IMR-90 (cell line): ENCODE measurements at regions of chr5 and their contacts with region 1.

Region 1: DNA sequence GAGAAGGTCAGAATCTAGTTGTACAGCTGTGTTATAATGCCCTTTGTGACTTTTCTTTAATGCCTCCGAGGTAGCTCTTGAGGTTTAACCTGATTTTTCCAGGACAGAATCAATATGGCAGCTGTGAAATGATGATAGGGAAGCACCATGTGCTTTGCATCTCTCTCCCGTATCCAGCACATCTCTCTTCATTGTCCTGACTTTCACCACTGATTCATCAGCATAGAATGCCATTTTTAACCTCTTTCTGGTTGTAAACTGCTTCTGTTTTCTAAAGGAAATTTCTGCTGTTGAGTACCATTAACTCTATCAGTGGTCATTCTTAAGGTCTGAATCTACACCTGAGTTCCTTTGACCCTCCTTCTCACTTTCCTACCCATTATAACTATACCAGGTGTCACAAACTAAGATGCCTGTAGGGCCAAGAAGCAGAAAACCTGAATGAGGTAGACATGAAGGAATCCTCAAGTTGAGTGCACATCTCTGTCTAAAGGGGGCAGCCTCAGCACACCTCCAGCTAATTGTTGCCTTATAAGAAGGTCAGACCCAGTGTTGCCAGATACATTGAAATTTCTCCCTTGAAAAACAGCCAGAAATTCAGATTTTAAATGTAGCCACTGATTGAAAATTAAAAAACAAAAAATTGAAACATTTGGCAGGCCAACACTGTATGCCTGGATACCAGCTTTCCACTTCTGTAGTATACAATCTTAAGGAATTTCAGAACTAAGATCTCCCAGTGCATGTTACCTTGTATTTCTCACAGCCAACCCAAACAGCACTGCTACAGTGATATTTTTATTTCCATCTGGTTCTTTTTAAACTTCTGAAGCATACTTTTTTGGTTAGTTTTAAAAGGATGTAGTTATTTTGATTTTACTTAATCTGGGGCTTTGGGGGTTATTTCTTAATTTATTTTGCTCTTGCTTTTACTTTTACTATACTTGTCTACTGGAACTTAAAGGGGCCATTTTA is 35.8 kb upstream of the TLX3 start:
- DNase-seq: peak; percentile 40
- ATAC-seq: peak; percentile 15; the same call in 1 of the 2 replicates
- H3K4me3 ChIP-seq: no peak overlapping the region
- H3K27ac ChIP-seq: no peak overlapping the region
- H3K4me1 ChIP-seq: peaks cover 12% of the 10 kb centered on the region
- H3K27me3 ChIP-seq: no peaks in the 10 kb centered on the region
- CTCF ChIP-seq: peak; percentile 50
- POLR2A ChIP-seq: no peak
- RAD21 ChIP-seq: peak; percentile 49

Region 2: DNA sequence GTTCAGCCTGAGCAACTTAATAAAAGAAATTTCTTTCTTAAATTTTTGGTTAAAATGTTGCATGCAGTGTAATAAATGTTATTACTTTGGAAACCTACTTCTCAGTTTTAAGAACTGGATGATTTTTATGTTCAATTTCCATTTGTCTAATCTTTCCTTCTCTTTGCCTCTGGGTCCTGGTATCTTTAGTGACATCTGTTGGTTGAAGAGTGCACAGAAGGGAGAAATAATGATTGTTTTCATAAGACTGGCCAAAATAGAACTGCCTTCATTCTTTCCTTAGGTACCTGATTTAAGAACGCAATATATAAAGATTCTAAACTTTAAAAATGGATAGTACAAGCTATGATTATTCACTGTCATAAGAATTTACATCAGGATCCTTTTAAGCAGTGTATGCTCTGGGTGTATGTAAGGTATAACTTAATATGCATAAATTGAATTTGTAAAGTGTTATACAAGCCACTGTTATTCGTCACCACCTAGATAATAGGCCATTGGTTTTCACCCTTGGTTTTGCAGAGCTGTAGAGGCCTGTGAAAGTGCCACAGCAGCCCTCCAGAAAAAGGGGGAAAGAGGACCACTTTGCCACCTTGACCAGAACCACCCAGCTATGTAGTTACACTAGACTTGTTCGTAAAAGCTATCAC is 47.1 kb before region 1 on chr5:
- CTCF ChIA-PET with region 1: interaction called, 3 read pairs
- POLR2A ChIA-PET with region 1: no interaction called
- dilution Hi-C with region 1: no loop called
- in situ Hi-C with region 1: no loop called
- intact Hi-C with region 1: loop called (anchors 5 kb)
- DNase-seq: peak; percentile 7
- ATAC-seq: no peak
- H3K4me3 ChIP-seq: no peak overlapping the region
- H3K27ac ChIP-seq: no peak overlapping the region
- H3K4me1 ChIP-seq: no peaks in the 10 kb centered on the region
- H3K27me3 ChIP-seq: no peaks in the 10 kb centered on the region
- CTCF ChIP-seq: peak; percentile 26; the same call in 1 of the 2 replicates
- POLR2A ChIP-seq: no peak
- RAD21 ChIP-seq: peak; percentile 22; the same call in 1 of the 2 replicates

Region 3: DNA sequence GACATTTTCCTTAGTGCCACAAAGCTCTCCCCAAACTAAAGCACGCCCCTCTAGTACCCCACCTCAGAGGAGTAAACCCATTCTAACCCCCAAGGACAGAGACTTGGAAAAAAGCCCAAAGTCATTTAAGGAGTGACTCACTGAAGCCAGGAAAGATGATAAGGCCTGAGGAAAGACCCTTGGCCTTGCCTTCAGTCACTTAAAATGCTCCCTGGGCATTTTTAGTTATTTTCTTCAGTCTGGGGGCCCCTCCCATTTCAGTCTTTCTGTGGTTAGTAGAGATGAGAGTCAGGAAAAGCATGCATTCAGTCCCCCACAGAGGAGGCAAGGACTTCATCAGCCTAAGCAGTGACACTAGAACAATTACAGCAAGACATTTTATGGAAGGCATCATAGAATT is 22.0 kb after region 1 on chr5:
- CTCF ChIA-PET with region 1: no interaction called
- POLR2A ChIA-PET with region 1: no interaction called
- dilution Hi-C with region 1: no loop called
- in situ Hi-C with region 1: no loop called
- intact Hi-C with region 1: no loop called
- DNase-seq: peak; percentile 24
- ATAC-seq: peak; percentile 63
- H3K4me3 ChIP-seq: no peak overlapping the region
- H3K27ac ChIP-seq: no peak overlapping the region
- H3K4me1 ChIP-seq: peaks cover 8% of the 10 kb centered on the region
- H3K27me3 ChIP-seq: no peaks in the 10 kb centered on the region
- CTCF ChIP-seq: no peak
- POLR2A ChIP-seq: no peak
- RAD21 ChIP-seq: no peak